Aorta (tissue), 5 donors: ENCODE measurements at regions of chr3 and their contacts with region 1.

Region 1: DNA sequence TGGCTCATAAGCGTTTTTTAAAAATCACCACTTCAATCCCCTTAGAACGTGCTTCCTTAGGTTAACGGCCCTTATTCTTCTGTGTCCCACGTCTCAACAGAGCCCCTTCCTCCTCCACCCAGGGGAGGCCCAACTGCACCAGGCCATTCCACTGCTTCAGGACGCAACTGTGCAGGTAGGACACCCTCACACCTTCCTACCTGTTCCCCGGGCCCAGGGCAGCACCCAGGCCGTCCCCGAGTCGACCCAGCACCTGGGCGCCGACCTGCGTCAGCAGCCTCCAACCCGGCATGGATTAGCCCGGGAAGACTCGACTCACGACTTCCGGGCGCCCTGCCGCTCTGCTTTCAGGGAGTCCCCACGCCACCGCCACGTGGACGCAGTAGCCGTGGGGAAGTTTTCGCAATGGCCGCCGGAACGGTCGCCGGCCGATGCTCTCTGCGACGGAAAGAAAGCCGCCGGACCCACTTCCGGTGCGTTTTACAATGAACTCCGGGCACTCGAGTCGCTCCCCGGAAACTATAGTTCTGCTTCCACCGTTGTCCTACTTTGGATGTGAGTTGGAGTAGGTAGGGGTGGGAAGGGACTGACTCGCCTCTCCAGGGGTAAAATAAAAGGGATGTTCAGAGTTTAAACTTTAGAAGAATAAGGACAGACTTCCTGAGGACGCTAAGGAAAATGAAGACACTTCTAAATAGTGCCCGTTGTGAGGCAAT is at the start of gene MRPL3:
- DNase-seq: peak; percentile 91 to 95
- ATAC-seq: peak; percentile 94
- H3K4me3 ChIP-seq: peak within 1 kb of the TSS; percentile 76 to 82
- H3K27ac ChIP-seq: peak within 1 kb of the TSS; percentile 29 to 69
- H3K4me1 ChIP-seq: no peaks in the 10 kb centered on the region
- H3K27me3 ChIP-seq: no peaks in the 10 kb centered on the region
- total RNA-seq, gene MRPL3: 44.7 to 52.5 TPM

Region 2: DNA sequence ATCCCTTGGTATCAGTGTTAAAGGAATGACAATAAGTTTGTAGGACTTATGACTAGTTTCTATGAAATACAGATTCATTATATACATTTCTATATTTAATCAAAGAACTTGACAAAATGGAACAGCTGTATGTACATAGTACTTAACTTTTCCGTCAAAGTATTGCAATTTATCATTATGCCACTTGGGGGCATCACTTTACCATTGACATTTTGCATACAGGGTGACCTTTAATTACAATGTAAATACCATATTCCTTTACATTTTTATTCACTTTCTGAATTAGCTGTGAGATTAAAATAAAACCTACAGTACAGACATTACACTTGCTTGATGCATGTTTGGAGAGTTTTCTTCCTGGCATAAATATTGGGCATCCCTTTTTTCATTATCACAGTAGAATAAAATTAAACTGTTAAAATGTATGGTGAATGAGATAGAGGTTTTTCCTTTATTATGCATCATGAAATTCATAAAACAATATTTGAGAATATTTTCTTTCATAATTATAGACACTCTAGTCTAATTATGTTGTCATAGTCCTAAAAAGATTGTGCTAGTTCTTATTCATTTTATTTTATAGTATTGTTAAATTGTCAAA is 469.1 kb before region 1 on chr3:
- intact Hi-C with region 1: loop called in 1 of 2 experiments (anchors 10 kb)
- DNase-seq: no peak
- ATAC-seq: no peak
- H3K4me3 ChIP-seq: no peak overlapping the region
- H3K27ac ChIP-seq: no peak overlapping the region
- H3K4me1 ChIP-seq: no peaks in the 10 kb centered on the region
- H3K27me3 ChIP-seq: no peaks in the 10 kb centered on the region

Region 3: GRCh38 chr3:131338948-131339640 is 163.6 kb before region 1 on chr3:
- intact Hi-C with region 1: no loop called
- DNase-seq: no peak
- ATAC-seq: no peak
- H3K4me3 ChIP-seq: no peak overlapping the region
- H3K27ac ChIP-seq: no peak overlapping the region
- H3K4me1 ChIP-seq: peaks cover 0 to 7% of the 10 kb centered on the region in 2 donors
- H3K27me3 ChIP-seq: no peaks in the 10 kb centered on the region

Region 4: DNA sequence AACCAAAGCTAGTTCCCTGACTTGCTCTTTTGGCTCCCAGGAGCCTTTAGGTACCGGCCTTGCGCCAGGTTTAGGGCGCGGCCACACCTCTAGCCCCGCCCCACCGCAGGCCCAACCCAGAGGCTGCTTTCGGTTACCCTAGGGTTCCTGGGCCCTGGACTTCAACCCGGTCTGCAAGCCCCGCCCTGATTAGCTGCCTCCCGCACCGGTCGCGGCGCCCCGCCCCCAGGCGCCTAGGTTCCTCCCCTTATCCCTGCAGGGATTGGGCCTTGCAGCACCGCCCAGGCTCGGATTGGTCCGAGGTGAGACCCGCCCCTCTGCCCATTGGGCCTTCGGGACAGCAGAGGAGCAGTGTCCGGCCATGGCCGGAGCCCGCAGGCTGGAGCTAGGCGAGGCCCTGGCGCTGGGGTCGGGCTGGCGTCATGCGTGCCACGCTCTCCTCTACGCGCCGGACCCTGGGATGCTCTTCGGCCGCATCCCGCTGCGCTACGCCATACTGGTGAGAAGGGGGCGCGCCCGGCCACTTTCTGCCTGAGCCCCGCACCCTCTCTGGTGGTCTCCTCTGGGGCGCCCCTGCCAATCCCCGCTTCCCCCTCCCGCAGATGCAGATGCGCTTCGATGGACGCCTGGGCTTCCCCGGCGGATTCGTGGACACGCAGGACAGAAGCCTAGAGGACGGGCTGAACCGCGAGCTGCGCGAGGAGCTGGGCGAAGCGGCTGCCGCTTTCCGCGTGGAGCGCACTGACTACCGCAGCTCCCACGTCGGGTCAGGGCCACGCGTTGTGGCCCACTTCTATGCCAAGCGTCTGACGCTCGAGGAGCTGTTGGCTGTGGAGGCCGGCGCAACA is 121.0 kb before region 1 on chr3 and contains the start of gene NUDT16:
- intact Hi-C with region 1: loop called (anchors 2 to 10 kb)
- DNase-seq: peak; percentile 100
- ATAC-seq: peak; percentile 99
- H3K4me3 ChIP-seq: peak within 1 kb of the TSS; percentile 66 to 73
- H3K27ac ChIP-seq: peak within 1 kb of the TSS; percentile 24 to 66
- H3K4me1 ChIP-seq: peaks cover 7 to 8% of the 10 kb centered on the region in 2 donors
- H3K27me3 ChIP-seq: no peaks in the 10 kb centered on the region
- total RNA-seq, gene NUDT16: 20.2 to 23.1 TPM

Region 5: DNA sequence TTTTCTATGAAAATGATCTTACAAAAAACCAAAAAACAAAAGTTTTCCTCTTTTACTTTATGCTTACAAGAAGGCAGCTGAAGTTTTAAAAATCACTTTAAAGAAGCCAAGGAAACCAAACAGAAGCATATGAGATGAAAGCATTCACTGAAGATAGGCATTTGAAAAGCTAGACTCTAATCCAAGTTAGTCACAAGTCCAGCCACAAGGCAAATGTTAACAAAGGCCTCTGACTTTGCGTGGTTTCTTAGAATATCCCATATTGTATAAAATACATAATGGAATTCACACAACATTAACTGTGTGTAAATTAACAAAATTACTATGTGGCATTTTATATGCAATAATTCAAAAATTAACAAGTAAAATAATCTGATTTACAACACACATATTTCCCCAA is 17.6 kb before region 1 on chr3:
- intact Hi-C with region 1: no loop called
- DNase-seq: no peak
- ATAC-seq: no peak
- H3K4me3 ChIP-seq: no peak overlapping the region
- H3K27ac ChIP-seq: no peak overlapping the region
- H3K4me1 ChIP-seq: no peaks in the 10 kb centered on the region
- H3K27me3 ChIP-seq: no peaks in the 10 kb centered on the region

Region 6: DNA sequence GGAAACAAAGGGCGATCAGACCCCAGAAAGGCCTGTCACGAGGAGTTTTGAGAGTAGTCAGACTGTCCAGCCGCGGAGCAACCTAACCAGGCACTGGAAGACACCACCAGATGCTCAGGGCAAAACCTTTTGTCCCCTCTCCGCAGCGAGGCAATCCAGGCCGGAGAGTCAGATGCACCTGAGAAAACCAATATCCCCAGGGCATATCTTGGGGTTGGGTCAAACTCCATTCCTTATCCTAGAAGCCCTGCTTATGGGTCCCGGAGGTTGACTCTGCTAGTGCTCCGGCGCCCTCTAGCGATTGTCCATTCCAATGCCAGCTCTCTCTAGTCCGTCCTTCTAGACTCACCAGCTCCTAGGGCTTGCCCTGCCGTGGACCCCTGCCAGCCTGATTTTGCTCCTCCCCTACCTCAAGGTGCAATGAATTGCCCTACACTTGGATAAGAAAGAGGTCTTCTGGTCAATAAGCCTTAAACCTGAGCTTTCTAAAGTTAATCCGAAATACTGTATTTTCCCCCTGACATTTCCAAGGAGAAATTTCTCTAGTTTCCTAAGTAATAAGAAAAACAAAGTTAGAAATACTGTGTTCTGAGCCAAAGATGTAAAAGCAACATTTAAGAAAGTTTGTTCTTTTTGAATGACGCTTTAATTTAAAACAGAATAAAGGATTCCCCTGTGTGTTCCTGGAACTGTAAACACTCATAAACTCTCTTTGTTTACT is 526.7 kb after region 1 on chr3:
- intact Hi-C with region 1: loop called in 1 of 2 experiments (anchors 10 kb)
- DNase-seq: peak; percentile 85 to 93
- ATAC-seq: peak; percentile 80
- H3K4me3 ChIP-seq: no peak overlapping the region
- H3K27ac ChIP-seq: no peak overlapping the region
- H3K4me1 ChIP-seq: no peaks in the 10 kb centered on the region
- H3K27me3 ChIP-seq: no peaks in the 10 kb centered on the region